Head of caudate nucleus (tissue), 42 donors: ENCODE measurements at regions of chr11 and their contacts with region 1.

Region 1: DNA sequence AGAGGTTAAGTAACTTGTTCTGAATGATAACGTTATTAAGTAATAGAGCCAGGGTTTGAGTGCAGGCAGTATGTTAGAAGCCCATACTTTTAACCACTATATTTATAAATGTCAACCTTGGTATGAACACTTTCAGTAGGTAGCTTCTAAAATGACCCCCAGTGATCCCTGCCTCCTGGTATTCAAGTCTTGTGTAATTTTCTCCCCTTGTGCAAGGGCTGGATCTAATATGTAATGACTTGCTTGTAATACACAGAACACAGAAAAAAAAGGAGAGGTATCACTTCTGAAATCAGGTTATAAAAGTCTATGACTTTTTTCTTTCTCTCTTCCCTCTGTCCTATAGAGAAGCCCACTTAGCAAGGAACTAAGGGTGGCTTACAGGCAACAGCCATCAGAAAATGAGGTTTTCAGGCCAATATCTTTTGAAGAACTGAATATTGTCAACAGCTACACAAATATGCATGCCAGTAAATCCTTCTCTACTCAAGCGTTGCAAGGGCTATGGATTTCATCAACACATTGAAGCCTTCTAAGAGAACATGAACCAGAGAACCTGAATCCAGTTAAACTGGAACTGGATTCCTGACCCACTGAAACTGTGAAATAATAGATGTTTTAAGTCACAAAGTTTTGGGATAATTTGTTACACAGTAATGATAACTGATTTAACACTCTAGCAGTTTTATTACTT is 712.3 kb downstream of the METTL15 start:
- DNase-seq: no peak

Region 2: DNA sequence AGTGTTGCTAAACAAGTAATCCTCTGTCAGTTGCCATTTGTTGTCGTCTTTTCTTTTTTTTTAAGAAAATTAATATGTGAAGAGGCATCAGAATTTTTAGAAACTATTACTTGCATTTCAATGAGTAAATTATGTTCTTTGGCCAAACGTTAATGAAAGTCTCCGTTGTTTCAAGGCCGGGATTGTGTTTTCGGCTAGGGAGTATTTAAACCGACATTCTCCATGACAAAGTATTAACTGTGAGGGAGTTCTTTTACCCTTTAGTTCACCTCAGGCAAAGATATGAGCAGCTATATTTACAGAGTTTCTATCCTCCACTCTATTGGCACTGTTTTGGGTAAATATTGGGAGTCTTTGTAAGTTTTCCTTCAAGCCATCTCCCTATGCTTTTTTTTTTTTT is 43.3 kb before region 1 on chr11:
- intact Hi-C with region 1: no loop called
- DNase-seq: no peak

Region 3: DNA sequence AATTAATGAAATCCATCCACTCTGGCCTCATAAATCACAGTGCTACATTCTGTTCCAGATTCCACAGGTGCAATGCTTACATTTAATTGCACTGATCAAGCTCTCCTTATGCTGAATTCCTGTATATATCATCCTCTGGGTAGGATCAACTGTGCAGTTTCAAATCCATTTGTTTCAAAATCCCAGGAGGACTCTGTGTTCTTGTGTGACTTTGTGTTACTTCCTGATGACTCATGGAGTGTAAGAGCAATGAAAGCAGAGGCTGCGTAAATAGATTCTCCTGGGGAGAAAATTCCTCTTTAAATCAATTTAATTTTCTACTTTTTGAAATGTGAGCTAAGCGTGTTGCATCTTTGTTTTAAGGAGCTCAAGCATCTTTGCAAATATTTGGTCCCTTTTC is 40.5 kb after region 1 on chr11:
- intact Hi-C with region 1: loop called (anchors 10 kb)
- DNase-seq: no peak

Region 4: DNA sequence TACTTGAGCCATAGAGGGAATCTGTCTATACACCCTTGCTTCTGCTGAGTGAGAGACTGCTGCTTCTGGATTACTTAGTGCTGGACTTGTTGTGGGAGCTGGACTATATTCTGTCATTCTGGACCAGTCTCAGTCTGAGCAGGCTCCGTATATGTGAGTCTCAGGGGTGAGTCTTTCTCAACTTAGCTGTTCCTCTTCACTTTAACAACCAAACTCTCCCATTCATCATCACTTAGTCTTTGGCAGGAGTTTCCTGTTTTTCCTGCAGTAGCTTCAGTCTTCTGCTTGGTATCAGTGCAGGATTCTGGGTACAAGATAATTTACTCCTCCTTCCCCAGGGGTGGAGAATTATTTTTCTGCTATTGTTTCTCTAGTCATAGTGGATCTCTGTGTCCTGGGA is 67.2 kb after region 1 on chr11:
- intact Hi-C with region 1: loop called (anchors 10 kb)
- DNase-seq: no peak

Region 5: DNA sequence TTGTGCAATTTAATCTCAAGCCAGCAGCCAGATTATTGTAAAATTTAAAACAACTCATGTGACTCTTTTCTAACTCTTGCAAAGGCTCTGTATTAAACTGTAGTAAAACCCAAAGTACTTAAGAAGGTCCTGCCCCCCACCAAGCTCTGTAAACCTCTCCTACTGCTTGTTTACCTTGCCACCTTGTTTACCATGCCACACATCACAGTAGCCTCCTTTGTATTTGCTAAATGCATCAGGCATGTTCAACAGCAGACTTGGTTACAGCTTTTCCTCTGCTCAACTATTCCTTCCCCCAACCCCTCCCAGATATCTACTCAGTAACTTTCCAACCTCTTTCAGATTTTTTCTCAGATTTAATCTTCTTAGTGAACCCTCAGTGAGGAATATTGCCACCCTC is 149.4 kb after region 1 on chr11:
- intact Hi-C with region 1: no loop called
- DNase-seq: no peak